ENCODE measurements at regions of chr17 and their contacts with region 1.

Region 1: DNA sequence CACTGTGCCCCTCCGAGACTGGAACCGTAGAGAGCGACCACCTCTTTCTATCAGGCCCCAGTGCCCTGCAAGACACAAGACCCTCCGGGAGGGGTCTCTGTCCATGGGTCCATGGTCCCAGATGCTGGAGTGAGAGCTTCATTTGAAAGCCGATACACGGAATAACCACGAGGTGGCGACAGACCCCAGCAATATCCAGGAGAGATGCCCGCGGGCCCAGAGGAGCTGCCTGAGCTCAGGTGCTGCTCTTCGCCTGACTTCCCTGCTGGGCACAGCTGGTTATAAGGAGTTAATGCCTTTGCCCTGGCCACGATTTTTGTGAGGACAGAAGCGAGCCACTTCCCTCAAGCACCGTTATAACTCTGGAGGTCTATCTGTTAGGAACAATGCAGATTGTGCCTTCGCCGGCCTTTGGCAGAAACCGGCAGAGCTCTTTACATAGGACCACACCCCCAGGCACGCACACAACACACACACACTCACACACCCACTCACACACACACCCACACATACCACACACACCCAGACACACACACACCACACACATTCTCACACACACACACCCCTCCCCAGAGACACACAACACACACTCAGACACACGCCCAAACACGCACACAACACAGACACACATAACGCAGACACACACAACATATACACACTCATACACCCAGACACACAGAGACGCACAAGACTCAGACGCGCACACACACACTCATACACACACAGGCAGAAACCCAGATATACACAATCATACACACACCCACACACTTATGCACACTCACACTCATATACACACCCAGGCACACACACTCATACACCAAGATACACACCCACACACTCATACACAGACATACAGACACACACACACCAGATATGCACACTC is 436.4 kb downstream of the SOX9 start:
- DNase-seq: peak; percentile 65
- ATAC-seq: peak; percentile 45 to 52

Region 2: DNA sequence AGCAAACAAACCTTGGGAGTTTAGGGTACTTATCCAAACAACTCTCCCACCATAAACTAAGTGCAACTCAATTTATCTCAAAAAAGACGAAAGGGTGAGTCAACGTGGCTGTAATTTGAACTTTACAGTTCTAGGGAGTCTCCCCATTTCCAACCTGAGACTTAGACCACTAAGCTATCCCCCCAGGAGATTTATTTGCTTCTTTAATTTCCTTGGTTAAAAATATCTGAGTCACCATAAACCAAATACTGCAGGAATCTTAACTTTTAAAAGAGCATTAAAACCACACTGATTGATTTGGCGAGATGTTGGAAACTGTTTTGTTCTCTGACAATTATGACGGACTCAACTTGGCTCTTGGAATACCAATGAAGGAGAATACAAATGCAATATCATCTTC is 735.7 kb before region 1 on chr17:
- intact Hi-C with region 1: no loop called
- DNase-seq: no peak
- ATAC-seq: no peak

Region 3: GRCh38 chr17:72456026-72456569 is 101.1 kb before region 1 on chr17:
- intact Hi-C with region 1: no loop called
- DNase-seq: no peak
- ATAC-seq: no peak

Region 4: DNA sequence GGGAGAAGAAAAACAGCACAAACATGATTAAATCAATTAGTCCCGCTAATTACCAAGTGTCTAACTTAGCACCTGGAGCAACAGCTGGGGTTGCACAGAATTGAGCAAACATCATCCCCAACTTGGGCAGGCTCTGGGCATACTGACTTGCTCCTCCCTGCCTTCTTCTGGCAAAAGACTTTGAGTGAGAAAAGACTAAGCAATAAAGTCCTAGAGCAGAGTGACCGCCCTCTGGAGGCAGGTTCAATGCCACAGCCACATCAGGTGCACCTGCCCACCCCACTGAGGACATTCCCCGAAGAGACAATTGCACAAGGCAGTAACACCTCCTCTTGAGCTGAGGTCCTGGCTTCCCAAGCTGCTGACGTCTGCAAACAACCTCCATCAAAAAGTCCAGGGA is 78.1 kb before region 1 on chr17:
- intact Hi-C with region 1: no loop called
- DNase-seq: no peak
- ATAC-seq: no peak

Region 5: DNA sequence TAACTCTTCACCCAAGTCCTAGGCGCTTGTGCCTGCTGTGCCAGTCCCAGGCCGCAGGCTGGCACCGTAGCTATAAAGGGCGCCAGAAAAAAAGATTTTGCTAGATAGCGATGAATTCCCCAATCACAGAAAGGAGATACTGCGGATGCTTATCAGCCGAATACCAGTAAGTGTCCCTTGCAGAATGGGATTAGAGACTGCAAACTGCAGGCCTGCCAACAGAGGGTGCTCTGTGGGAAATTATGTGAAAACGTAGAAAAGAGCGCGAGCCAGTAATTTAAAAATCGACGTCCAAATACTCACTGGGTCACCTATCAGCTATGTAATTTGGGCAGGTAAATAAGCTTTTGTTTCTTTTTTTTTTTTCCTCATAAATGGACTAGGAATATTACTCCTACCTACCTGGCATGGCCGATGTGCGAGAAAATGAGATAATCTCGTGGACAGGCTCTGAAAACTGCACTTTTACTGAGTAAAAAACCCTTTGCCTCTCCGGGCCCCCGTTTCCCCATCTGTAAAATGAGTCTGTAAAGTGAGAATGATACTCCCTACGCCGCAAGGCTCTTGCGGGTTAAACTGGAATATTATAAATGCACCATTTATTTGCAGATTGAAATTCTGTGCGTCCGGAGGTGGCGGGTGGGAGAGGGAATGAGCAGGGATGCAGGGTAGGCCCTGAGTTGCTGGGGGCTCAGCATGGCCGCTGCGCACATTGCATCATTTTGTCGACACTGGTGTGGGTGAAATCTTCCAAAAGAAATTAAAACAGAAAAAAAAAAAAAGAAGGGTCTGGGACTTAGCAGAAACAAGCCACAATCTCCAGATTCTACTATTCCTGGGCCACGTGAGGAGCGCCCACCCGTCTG is 634.5 kb after region 1 on chr17:
- intact Hi-C with region 1: loop called in 1 of 2 experiments (anchors 10 kb)
- DNase-seq: peak; percentile 71
- ATAC-seq: peak; percentile 10 to 35